ENCODE measurements at regions of chr16 and their contacts with region 1.

Region 1: GRCh38 chr16:28140788-28141618 is 70.8 kb downstream of the XPO6 start:
- DNase-seq: no peak
- ATAC-seq: peak; percentile 65
- H3K4me3 Mint-ChIP-seq: peak overlapping the region; percentile 70
- H3K27ac Mint-ChIP-seq: peak overlapping the region; percentile 92
- H3K4me1 Mint-ChIP-seq: peaks cover 79% of the 10 kb centered on the region
- H3K27me3 Mint-ChIP-seq: no peaks in the 10 kb centered on the region
- CTCF ChIP-seq: no peak

Region 2: DNA sequence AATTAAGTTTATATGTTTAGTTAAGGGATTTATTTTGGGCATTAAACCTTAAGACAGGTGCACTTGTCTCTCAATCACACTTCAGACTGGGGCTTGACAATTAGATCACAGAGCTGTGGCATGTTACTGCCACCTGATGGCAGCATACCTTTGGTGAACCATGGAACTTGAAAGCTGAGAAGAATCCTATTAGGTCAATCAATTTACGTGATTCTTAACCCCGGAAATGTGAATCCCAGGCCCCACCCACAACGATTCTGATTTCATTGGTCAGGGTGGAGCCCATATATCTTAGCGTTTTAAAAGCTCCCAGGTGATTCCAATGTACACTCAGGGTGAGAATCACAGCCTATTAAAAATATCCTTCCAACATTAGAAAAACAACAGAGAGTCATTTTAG is 168.5 kb before region 1 on chr16:
- CTCF ChIA-PET with region 1: interaction called, 3 read pairs
- POLR2A ChIA-PET with region 1: no interaction called
- intact Hi-C with region 1: loop called (anchors 2 kb)
- DNase-seq: no peak
- ATAC-seq: peak; percentile 77
- H3K4me3 Mint-ChIP-seq: no peak overlapping the region
- H3K27ac Mint-ChIP-seq: no peak overlapping the region
- H3K4me1 Mint-ChIP-seq: no peaks in the 10 kb centered on the region
- H3K27me3 Mint-ChIP-seq: peaks cover 6% of the 10 kb centered on the region
- CTCF ChIP-seq: no peak

Region 3: GRCh38 chr16:28181515-28181914 is 40.5 kb after region 1 on chr16:
- CTCF ChIA-PET with region 1: no interaction called
- POLR2A ChIA-PET with region 1: interaction called, 4 read pairs
- intact Hi-C with region 1: loop called (anchors 1 kb)
- DNase-seq: no peak
- ATAC-seq: no peak
- H3K4me3 Mint-ChIP-seq: peak overlapping the region; percentile 77
- H3K27ac Mint-ChIP-seq: peak overlapping the region; percentile 89
- H3K4me1 Mint-ChIP-seq: peaks cover 81% of the 10 kb centered on the region
- H3K27me3 Mint-ChIP-seq: no peaks in the 10 kb centered on the region
- CTCF ChIP-seq: no peak

Region 4: DNA sequence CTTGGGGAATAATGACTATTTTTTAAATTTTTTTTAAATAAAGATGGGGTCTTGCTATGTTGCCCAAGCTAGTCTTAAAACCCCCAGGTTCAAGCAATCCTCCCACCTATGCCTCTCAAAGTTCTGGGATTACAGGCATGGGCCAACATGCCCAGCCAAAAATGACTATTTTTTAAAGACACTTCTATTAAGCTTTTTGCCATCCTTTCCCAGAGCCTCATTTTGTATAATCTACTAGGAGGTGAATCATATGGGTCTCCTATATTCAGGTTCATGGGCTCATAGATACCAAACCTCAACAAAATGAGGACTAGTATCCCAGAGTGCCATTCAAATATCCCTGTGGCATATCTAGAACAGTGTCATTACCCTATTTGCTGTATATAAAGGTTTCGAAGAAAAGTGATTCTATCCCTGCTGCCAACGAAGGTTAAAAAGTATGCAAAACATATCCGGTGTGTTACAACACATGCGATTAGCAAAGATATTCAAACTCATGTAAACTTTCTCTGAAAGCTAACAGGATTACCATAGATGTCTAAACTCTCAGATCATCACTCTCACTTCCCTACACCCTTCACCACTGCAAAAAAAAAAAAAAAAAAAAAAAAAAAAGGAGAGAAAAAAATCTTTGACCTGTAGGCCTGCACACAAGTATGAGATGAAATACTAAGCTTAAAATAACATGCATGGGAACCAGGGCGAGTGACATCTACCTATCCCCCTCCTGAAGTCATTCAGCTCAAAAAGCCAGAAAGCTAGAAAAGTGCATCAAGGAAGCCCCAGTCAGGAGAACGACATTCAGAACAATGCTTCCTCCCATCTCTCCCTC is 47.3 kb after region 1 on chr16:
- CTCF ChIA-PET with region 1: interaction called, 3 read pairs
- POLR2A ChIA-PET with region 1: interaction called, 19 read pairs
- intact Hi-C with region 1: loop called (anchors 1 kb)
- DNase-seq: no peak
- ATAC-seq: peak; percentile 63
- H3K4me3 Mint-ChIP-seq: peak overlapping the region; percentile 75
- H3K27ac Mint-ChIP-seq: peak overlapping the region; percentile 91
- H3K4me1 Mint-ChIP-seq: peaks cover 93% of the 10 kb centered on the region
- H3K27me3 Mint-ChIP-seq: no peaks in the 10 kb centered on the region
- CTCF ChIP-seq: no peak

Region 5: GRCh38 chr16:28193530-28194423 is 52.8 kb after region 1 on chr16:
- CTCF ChIA-PET with region 1: interaction called, 3 read pairs
- POLR2A ChIA-PET with region 1: interaction called, 19 read pairs
- intact Hi-C with region 1: loop called (anchors 1 kb)
- DNase-seq: no peak
- ATAC-seq: peak; percentile 16
- H3K4me3 Mint-ChIP-seq: peak overlapping the region; percentile 82
- H3K27ac Mint-ChIP-seq: peak overlapping the region; percentile 98
- H3K4me1 Mint-ChIP-seq: peaks cover 81% of the 10 kb centered on the region
- H3K27me3 Mint-ChIP-seq: no peaks in the 10 kb centered on the region
- CTCF ChIP-seq: no peak

Region 6: DNA sequence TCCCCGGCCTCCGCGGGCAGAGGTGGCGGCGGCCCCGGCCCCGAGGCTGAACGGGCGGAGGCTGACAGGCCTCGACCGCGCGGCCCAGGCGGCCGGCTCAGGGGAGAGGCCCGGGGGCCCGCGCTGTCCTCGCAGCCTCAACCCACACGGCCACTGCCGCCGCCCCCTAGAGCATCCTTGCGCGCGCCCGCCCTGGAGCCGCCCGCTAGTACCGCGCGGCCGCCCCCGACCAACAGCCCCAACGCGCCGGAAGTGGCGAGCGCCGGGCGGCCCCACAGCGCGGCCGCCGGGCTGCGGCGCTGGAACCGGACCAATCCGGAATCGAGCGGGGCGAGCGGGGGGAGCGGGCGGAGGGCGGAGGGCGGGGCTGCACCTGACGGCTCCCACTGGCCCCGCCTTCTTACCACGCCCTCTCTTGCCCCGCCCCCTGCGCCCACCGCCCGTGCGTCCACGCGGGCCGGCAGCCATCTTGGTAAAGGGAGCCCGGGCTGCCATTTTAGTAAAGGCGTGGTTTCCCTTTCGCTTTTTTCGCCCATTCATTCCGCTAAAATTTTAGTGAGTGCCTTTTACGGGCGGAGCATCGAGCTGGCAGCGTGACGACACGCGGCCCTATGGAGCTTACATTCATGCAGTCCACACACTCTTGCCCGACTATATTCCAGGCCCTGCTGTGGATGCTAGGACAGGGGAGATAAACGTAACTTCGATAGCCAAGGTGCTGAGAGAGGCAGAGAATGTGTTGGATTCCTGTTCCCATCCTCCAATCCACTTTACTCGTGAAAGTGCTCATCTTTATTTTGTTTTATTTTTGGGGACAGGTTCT is 70.9 kb after region 1 on chr16 and contains the start of gene XPO6:
- CTCF ChIA-PET with region 1: interaction called, 32 read pairs
- POLR2A ChIA-PET with region 1: interaction called, 31 read pairs
- intact Hi-C with region 1: loop called (anchors 1 kb)
- DNase-seq: peak; percentile 99
- ATAC-seq: peak; percentile 89
- H3K4me3 Mint-ChIP-seq: peak within 1 kb of the TSS; percentile 89
- H3K27ac Mint-ChIP-seq: peak within 1 kb of the TSS; percentile 79
- H3K4me1 Mint-ChIP-seq: peaks cover 38% of the 10 kb centered on the region
- H3K27me3 Mint-ChIP-seq: no peaks in the 10 kb centered on the region
- CTCF ChIP-seq: no peak
- total RNA-seq, gene XPO6: 212 and 236 TPM in 2 replicates

Region 7: DNA sequence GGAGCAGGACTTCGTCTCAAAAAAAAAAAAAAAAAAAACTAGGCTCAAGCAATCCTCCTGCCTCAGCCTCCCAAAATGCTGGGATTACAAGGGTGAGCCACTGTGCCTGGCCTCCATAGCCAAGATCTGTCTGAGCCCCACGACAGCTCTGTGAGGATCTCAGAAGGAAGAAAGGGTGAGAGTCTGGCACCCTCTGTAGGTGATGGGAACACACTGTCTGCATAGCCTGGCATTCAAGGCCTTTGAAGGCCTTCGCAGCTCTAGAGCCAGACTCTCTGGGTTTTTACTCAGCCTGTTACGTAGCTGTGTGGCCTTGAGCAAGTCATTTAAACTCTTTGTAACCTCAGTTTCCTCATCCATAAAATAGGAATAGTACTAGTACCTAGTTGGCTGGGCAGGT is 77.1 kb after region 1 on chr16:
- CTCF ChIA-PET with region 1: interaction called, 32 read pairs
- POLR2A ChIA-PET with region 1: interaction called, 6 read pairs
- intact Hi-C with region 1: loop called (anchors 1 kb)
- DNase-seq: no peak
- ATAC-seq: peak; percentile 99
- H3K4me3 Mint-ChIP-seq: no peak overlapping the region
- H3K27ac Mint-ChIP-seq: no peak overlapping the region
- H3K4me1 Mint-ChIP-seq: peaks cover 2% of the 10 kb centered on the region
- H3K27me3 Mint-ChIP-seq: no peaks in the 10 kb centered on the region
- CTCF ChIP-seq: no peak

Region 8: DNA sequence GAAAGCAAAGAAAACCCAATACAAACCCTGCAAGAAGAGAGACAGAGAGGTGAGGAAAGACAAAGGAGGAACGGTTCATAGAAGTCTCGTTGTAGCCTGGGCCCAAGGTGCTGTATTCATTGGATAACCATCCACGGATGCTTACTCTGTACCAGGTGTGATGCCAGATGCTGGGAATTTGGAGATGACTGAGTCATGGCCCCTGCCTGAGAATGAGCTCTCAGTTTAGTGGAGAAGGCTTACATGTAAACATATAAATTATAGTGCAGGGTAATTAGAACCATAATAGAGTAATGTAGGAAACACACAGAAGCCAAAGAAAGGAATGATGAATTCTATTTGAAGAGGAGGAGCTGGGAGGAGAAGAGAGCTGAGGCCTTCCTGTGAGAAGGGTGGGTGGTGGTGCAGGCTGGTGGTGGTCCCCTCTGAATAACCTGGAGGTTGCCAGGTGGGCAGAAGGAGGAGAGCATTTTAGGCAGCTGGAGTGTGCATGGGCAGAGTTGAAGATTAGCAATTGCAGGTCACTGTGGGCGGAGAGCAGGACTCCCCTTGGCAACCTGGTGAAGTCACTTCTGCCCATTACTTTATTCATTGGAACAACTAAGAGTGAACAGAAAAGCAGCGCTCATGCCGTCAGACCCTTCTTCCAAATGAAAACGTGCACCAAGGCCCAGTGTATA is 1629.4 kb after region 1 on chr16:
- CTCF ChIA-PET with region 1: no interaction called
- POLR2A ChIA-PET with region 1: no interaction called
- intact Hi-C with region 1: no loop called
- DNase-seq: no peak
- ATAC-seq: no peak
- H3K4me3 Mint-ChIP-seq: no peak overlapping the region
- H3K27ac Mint-ChIP-seq: no peak overlapping the region
- H3K4me1 Mint-ChIP-seq: no peaks in the 10 kb centered on the region
- H3K27me3 Mint-ChIP-seq: no peaks in the 10 kb centered on the region
- CTCF ChIP-seq: no peak

Measured in activated B cell treated with CpG ODN at 0.5 μM for 24 hours (primary cell).